A673 (cell line): ENCODE measurements at regions of chr11 and their contacts with region 1.

Region 1: GRCh38 chr11:77195171-77195751 is 67.2 kb downstream of the MYO7A start:
- DNase-seq: no peak
- H3K4me3 ChIP-seq: no peak overlapping the region
- H3K27ac ChIP-seq: no peak overlapping the region
- H3K4me1 ChIP-seq: no peaks in the 10 kb centered on the region
- H3K27me3 ChIP-seq: no peaks in the 10 kb centered on the region
- CTCF ChIP-seq: no peak

Region 2: GRCh38 chr11:77259641-77260040 is 64.4 kb after region 1 on chr11:
- CTCF ChIA-PET with region 1: no interaction called
- POLR2A ChIA-PET with region 1: no interaction called
- intact Hi-C with region 1: no loop called
- DNase-seq: no peak
- H3K4me3 ChIP-seq: no peak overlapping the region
- H3K27ac ChIP-seq: no peak overlapping the region
- H3K4me1 ChIP-seq: no peaks in the 10 kb centered on the region
- H3K27me3 ChIP-seq: no peaks in the 10 kb centered on the region
- CTCF ChIP-seq: no peak

Region 3: DNA sequence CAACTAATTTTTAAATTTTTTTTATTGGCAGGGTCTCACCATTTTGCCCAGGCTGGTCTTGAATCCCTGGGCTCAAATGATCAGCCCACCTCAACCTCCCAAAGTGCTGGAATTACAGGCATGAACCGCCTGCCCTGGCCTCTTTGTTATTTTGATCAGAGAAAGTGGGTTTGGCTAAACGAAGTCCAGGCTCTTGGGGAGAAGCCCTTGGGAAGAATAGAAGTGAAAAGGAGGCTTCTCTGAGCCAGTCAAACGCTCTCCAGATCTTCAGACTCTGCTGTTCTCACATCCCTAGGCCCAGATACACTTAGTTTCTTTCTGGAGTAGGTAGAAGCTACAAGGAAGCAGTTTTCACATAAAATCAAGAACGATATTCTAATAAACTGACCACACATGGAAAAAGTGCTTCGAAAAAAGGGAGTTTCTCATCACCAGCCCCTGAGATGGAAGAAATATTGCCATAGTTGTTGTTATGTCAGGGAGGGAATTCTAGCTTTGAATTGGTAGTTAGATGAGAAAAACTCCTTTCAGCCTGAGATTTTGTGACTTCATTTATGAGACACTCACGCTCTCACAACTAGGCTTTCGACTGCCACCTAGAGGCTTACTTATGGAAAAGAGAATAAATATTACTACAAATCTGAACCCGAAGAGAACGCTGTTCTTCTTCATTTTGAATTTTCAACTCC is 352.7 kb after region 1 on chr11:
- CTCF ChIA-PET with region 1: interaction called, 15 read pairs
- POLR2A ChIA-PET with region 1: no interaction called
- intact Hi-C with region 1: loop called (anchors 1 kb)
- DNase-seq: peak; percentile 77
- H3K4me3 ChIP-seq: no peak overlapping the region
- H3K27ac ChIP-seq: no peak overlapping the region
- H3K4me1 ChIP-seq: no peaks in the 10 kb centered on the region
- H3K27me3 ChIP-seq: no peaks in the 10 kb centered on the region
- CTCF ChIP-seq: peak; percentile 79